IMR-90 (cell line): ENCODE measurements at regions of chr4 and their contacts with region 1.

Region 1: GRCh38 chr4:47836641-47837093 is 1.2 kb downstream of the CORIN start:
- DNase-seq: peak; percentile 84
- ATAC-seq: peak; percentile 95
- H3K4me3 ChIP-seq: peak overlapping the region; percentile 51
- H3K27ac ChIP-seq: peak overlapping the region; percentile 10; the same call in 1 of the 2 replicates
- H3K4me1 ChIP-seq: peaks cover 12% of the 10 kb centered on the region
- H3K27me3 ChIP-seq: no peaks in the 10 kb centered on the region
- CTCF ChIP-seq: peak; percentile 87
- POLR2A ChIP-seq: no peak
- RAD21 ChIP-seq: peak; percentile 81

Region 2: DNA sequence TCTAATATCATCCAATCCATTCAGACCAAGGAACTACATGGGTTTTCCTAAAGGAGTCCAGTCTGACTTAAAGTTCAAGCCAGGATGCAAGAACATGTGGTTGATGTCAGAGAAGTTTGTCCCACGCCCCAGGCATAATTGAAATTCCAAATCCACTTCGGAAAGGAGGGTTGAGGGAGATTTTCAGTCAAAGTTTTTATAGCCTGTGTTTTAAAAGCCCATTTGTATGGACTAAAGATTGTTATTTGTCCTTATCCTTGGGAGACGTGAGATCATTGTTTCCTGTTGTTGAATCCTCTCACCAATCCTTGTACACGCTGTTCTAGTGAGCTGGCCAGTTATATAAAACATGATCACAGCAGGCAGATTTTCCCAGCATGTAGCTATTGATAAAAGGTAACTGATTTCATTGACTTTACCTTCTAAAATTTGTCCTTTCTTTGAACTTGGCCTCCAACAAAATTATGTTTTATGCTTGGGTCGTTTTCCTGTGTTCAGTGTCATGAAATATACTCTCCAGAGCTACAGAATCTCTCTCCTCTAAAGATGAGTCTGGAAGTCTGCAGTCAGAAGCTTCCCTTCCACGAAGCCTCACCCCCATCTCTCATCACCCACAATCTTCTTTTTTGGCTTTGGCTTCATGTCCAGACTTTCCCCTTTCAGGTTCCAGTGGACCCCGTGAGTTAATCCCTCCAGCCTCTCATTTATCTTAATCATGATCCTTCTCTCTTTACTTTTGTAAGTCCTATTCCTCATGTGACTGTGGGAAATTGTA is 258.7 kb before region 1 on chr4:
- CTCF ChIA-PET with region 1: no interaction called
- POLR2A ChIA-PET with region 1: interaction called, 14 read pairs
- dilution Hi-C with region 1: no loop called
- in situ Hi-C with region 1: no loop called
- intact Hi-C with region 1: no loop called
- DNase-seq: peak; percentile 17
- ATAC-seq: 0 out of 2 replicates have a peak, but pooled peaks have one; percentile 27
- H3K4me3 ChIP-seq: no peak overlapping the region
- H3K27ac ChIP-seq: no peak overlapping the region
- H3K4me1 ChIP-seq: no peaks in the 10 kb centered on the region
- H3K27me3 ChIP-seq: no peaks in the 10 kb centered on the region
- CTCF ChIP-seq: no peak
- POLR2A ChIP-seq: no peak
- RAD21 ChIP-seq: no peak

Region 3: DNA sequence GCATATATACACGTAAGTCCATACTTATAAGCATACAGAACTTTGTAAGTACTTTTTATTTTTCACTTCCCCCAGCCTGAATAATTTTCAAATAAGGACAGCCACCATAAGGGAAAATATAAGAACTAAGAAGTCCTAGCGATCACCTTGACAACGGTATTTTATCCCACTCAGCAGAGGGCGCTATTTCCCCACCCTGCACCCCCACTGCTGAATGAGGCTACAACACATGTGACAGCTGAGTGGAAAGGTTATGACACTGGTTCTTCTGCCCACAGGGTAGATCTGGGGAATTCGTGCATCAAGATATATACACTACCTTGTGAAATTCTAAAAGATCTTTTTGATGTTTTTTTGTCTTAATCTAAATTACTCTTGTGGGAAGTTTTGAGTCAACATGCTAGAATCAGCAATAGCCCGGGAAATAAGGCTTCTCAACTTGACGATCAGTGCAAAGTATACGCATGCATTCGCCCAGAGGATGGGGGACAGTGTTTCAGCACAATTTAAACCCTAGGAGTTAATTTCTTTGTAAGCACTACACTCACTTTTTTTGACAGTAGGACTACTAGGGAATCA is 150.3 kb before region 1 on chr4:
- CTCF ChIA-PET with region 1: interaction called, 14 read pairs
- POLR2A ChIA-PET with region 1: no interaction called
- dilution Hi-C with region 1: no loop called
- in situ Hi-C with region 1: no loop called
- intact Hi-C with region 1: loop called (anchors 1 kb)
- DNase-seq: peak; percentile 38
- ATAC-seq: peak; percentile 69
- H3K4me3 ChIP-seq: no peak overlapping the region
- H3K27ac ChIP-seq: no peak overlapping the region
- H3K4me1 ChIP-seq: no peaks in the 10 kb centered on the region
- H3K27me3 ChIP-seq: peaks cover 10% of the 10 kb centered on the region
- CTCF ChIP-seq: peak; percentile 71
- POLR2A ChIP-seq: no peak
- RAD21 ChIP-seq: peak; percentile 68

Region 4: DNA sequence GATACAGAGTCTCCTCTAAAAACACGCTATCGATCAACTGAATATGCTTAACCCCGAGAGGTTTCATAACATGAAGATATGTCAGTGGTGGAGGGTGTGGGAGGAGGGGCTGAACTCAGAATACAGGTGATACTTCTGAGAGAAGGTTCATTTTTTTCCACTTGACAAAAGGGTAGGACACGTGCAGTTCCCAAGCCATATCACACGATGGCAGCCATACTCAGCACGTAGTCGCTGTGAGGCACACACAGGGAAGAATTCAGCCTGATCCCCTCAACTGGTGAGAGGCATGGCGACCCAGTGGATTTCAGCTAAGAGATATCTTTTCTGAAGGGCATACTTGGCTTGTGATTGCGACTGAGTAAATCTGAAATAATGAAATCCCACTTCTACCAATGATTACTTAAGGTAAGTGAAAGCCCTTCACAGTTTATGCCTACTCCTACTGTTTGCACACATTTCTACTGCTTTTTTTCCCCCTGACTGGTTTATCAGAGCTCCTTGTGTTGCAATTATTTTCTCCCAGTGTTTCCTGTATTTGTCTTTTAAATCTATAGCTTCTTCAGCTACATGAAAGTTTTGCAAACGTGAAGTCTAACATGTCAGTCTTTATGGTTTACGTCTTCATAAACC is 131.9 kb before region 1 on chr4:
- CTCF ChIA-PET with region 1: interaction called, 20 read pairs
- POLR2A ChIA-PET with region 1: no interaction called
- dilution Hi-C with region 1: no loop called
- in situ Hi-C with region 1: loop called (anchors 10 kb)
- intact Hi-C with region 1: loop called (anchors 1 kb)
- DNase-seq: peak; percentile 37
- ATAC-seq: peak; percentile 93
- H3K4me3 ChIP-seq: no peak overlapping the region
- H3K27ac ChIP-seq: no peak overlapping the region
- H3K4me1 ChIP-seq: no peaks in the 10 kb centered on the region
- H3K27me3 ChIP-seq: peaks cover 9% of the 10 kb centered on the region
- CTCF ChIP-seq: peak; percentile 58
- POLR2A ChIP-seq: no peak
- RAD21 ChIP-seq: peak; percentile 69

Region 5: GRCh38 chr4:47914220-47914925 is 77.7 kb after region 1 on chr4 and contains the start of gene NFXL1:
- CTCF ChIA-PET with region 1: interaction called, 3 read pairs
- POLR2A ChIA-PET with region 1: no interaction called
- dilution Hi-C with region 1: no loop called
- in situ Hi-C with region 1: no loop called
- intact Hi-C with region 1: loop called (anchors 5 kb)
- DNase-seq: peak; percentile 96
- ATAC-seq: peak; percentile 98
- H3K4me3 ChIP-seq: peak within 1 kb of the TSS; percentile 79
- H3K27ac ChIP-seq: peak within 1 kb of the TSS; percentile 78
- H3K4me1 ChIP-seq: no peaks in the 10 kb centered on the region
- H3K27me3 ChIP-seq: no peaks in the 10 kb centered on the region
- CTCF ChIP-seq: no peak
- POLR2A ChIP-seq: peak; percentile 85
- RAD21 ChIP-seq: no peak
- total RNA-seq, gene NFXL1: 21.9 and 23.1 TPM in 2 replicates

Region 6: DNA sequence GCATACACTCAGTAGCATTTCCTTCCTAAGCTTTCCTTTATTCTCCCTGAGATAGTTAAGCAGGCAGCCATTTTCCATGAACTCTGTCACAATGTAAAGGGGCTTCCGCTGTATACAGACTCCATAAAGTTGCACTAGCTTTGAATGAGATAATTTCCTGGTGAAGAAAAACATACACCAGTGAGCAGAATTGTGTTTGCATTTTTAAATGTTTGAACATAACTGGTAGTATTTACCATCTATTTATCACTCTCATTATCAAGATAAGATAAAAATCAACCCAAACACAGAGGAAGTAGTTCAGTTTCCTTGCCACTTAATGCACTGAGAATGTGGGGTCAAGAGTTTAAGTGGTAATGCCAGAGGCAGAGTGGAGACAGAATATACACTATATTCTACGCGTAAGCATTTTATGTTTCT is 243.3 kb after region 1 on chr4:
- CTCF ChIA-PET with region 1: no interaction called
- POLR2A ChIA-PET with region 1: no interaction called
- dilution Hi-C with region 1: no loop called
- in situ Hi-C with region 1: no loop called
- intact Hi-C with region 1: no loop called
- DNase-seq: no peak
- ATAC-seq: no peak
- H3K4me3 ChIP-seq: no peak overlapping the region
- H3K27ac ChIP-seq: no peak overlapping the region
- H3K4me1 ChIP-seq: no peaks in the 10 kb centered on the region
- H3K27me3 ChIP-seq: no peaks in the 10 kb centered on the region; the same call in none of the 2 replicates
- CTCF ChIP-seq: no peak
- POLR2A ChIP-seq: no peak
- RAD21 ChIP-seq: no peak